Transverse colon (tissue), 4 donors: ENCODE measurements at regions of chr4 and their contacts with region 1.

Region 1: DNA sequence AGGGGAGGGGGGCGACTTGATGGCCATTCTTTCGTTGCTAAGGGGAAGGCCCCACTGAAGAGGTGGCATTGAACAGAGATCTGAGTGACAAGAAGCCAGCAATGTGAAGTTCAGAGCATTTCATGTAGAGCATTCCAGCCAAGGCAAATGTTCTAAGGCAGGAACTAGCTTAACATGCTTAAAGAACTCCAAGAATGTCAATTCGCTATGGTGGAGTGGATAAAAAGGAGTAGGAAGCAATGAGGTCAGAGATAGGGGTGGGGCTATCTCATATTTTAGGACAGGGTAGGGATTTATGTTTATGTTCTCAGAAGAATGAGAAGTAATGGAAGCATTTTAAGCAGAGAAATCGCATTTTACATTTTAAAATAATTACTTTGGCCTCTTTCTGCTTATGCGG is 130.9 kb downstream of the TTC29 start:
- DNase-seq: no peak
- H3K4me3 ChIP-seq: no peak overlapping the region
- H3K27ac ChIP-seq: no peak overlapping the region
- H3K4me1 ChIP-seq: no peaks in the 10 kb centered on the region
- H3K27me3 ChIP-seq: no peaks in the 10 kb centered on the region
- CTCF ChIP-seq: no peak
- EP300 ChIP-seq: no peak
- POLR2A ChIP-seq: no peak

Region 2: GRCh38 chr4:146998157-146998556 is 183.4 kb after region 1 on chr4:
- in situ Hi-C with region 1: no loop called
- intact Hi-C with region 1: no loop called
- DNase-seq: no peak
- H3K4me3 ChIP-seq: no peak overlapping the region
- H3K27ac ChIP-seq: no peak overlapping the region
- H3K4me1 ChIP-seq: no peaks in the 10 kb centered on the region
- H3K27me3 ChIP-seq: no peaks in the 10 kb centered on the region
- CTCF ChIP-seq: no peak
- EP300 ChIP-seq: no peak
- POLR2A ChIP-seq: no peak

Region 3: DNA sequence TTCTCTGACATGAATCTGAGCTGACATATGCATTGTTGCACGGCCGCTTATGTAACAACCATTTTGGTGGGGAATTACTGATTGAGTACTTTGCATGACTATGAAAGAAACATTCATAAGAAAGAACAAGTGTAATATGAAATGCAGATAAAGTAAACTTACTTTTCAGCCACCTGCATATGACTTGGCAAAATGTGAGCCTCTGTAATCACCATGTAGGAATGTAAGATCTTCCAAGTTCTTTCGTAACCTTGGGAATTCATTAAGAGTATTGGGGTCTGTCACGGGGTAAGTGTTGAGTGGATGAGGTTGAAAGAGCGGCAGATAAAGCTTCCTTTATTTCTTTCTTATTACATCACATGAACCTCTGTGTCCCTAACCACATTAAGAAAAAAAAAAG is 1975.9 kb after region 1 on chr4:
- in situ Hi-C with region 1: no loop called
- intact Hi-C with region 1: loop called (anchors 5 kb)
- DNase-seq: no peak
- H3K4me3 ChIP-seq: no peak overlapping the region
- H3K27ac ChIP-seq: no peak overlapping the region
- H3K4me1 ChIP-seq: peaks cover 4 to 28% (median 9%) of the 10 kb centered on the region in 4 donors
- H3K27me3 ChIP-seq: no peaks in the 10 kb centered on the region
- CTCF ChIP-seq: no peak
- EP300 ChIP-seq: no peak
- POLR2A ChIP-seq: no peak